ENCODE measurements at regions of chr7 and their contacts with region 1.

Region 1: DNA sequence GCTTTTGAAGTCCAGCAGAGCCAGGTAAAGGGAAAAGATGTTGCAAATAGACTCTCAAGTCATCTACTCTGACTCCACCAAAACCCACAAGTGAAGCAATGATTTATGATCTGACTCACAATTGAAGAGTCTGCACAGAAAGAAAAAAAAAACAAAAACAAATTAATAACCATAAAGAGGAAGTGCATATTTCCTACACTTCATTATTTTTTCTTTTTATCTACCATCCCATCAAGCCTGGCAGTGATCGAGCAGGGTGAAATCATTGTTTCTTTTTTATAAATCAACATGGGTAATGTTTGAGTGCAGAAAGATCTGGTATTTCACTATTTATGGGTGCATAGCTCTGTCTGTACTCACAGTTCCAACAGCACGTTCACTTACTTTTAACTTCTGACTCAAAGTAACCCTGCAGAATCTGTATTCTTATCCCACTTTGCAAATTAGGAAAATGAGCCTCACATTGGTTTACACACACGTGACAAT is 829.0 kb downstream of the TNS3 start:
- DNase-seq: peak; percentile 88
- H3K4me3 Mint-ChIP-seq: no peak overlapping the region
- H3K27ac Mint-ChIP-seq: peak overlapping the region; percentile 47
- H3K4me1 Mint-ChIP-seq: peaks cover 42% of the 10 kb centered on the region
- H3K27me3 Mint-ChIP-seq: no peaks in the 10 kb centered on the region
- CTCF ChIP-seq: no peak

Region 2: GRCh38 chr7:46454816-46455215 is 298.1 kb before region 1 on chr7:
- CTCF ChIA-PET with region 1: no interaction called
- POLR2A ChIA-PET with region 1: interaction called, 11 read pairs
- intact Hi-C with region 1: loop called (anchors 10 kb)
- DNase-seq: no peak
- H3K4me3 Mint-ChIP-seq: no peak overlapping the region
- H3K27ac Mint-ChIP-seq: peak overlapping the region; percentile 92
- H3K4me1 Mint-ChIP-seq: peaks cover 33% of the 10 kb centered on the region
- H3K27me3 Mint-ChIP-seq: no peaks in the 10 kb centered on the region
- CTCF ChIP-seq: no peak

Region 3: GRCh38 chr7:46786221-46786954 is 33.5 kb after region 1 on chr7:
- CTCF ChIA-PET with region 1: no interaction called
- POLR2A ChIA-PET with region 1: no interaction called
- intact Hi-C with region 1: loop called (anchors 1 kb)
- DNase-seq: peak; percentile 61
- H3K4me3 Mint-ChIP-seq: no peak overlapping the region
- H3K27ac Mint-ChIP-seq: peak overlapping the region; percentile 67
- H3K4me1 Mint-ChIP-seq: peaks cover 17% of the 10 kb centered on the region
- H3K27me3 Mint-ChIP-seq: no peaks in the 10 kb centered on the region
- CTCF ChIP-seq: no peak

Measured in MCF 10A (cell line).